Activated T-helper 2 cell treated with anti-CD3 and anti-CD28 coated beads, Interferon-gamma antibody, Interleukin-2, Interleukin-4, amounts not matched to agents 10 μg/mL and 5 μg/mL and 100 μg/mL, durations not matched to agents 14 hours and 24 hours and 36 hours (primary cell): ENCODE measurements at regions of chr1 and their contacts with region 1.

Region 1: DNA sequence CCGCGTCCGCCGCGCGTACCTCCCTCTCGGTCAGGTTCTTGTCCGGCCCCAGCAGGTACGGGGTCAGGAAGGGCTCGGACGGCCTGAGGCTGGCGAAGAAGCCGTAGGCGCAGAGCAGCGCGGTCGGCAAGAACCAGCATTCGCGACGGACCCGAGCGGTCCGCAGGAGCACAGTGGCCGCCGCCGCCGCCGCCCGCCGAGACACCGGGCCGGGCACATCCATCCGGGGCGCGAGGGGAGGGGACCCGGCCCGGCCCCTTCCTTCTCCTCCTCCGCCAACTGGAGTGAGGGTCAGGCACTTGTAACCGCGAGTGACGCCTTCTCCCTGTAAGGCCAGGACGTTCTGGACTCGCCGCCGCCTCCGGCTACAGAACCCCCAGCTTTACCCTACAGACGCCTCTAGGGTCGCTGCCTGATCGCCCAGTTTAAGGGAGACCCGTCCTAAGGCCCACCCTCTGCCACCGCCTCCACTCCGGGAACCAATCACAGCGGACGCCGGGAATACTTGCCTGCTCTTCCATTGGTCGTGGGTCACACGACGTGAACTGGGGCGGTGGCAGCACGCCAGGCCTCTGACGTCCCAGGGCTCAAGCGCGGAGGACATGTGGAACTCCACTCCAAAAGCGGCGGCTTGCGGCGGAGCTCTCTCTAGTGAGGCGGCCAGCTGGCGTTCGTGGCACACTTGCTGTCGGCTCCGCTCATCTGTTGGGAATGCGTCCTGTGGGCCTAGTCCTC is at the start of gene SLC19A2:
- DNase-seq: peak; percentile 94
- H3K4me3 Mint-ChIP-seq: peak within 1 kb of the TSS; percentile 89
- H3K27ac Mint-ChIP-seq: peak within 1 kb of the TSS; percentile 90
- H3K4me1 Mint-ChIP-seq: peaks cover 59% of the 10 kb centered on the region
- H3K27me3 Mint-ChIP-seq: no peaks in the 10 kb centered on the region
- total RNA-seq, gene SLC19A2: 11.2 and 11.9 TPM in 2 replicates

Region 2: DNA sequence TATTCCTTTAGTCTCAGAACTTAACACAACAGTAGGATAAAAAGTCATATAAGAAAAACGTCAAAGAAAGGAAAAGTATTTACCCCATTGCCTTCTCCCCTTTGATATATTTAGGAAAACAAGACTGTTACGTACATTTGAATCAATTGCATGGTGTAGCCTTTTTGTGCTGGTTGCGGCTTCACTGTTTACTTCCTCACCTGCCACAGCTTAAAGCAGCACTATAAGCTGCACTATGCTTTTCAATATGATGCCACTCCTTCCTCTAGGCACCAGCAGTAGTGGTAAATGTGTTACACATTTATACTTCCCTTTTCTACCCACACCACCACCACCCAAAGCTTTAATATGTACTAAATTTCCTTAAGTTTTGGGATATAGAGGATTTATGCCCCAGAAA is 268.1 kb before region 1 on chr1:
- intact Hi-C with region 1: no loop called
- DNase-seq: no peak
- H3K4me3 Mint-ChIP-seq: no peak overlapping the region
- H3K27ac Mint-ChIP-seq: no peak overlapping the region
- H3K4me1 Mint-ChIP-seq: peaks cover 3% of the 10 kb centered on the region
- H3K27me3 Mint-ChIP-seq: no peaks in the 10 kb centered on the region

Region 3: GRCh38 chr1:169312084-169312954 is 173.4 kb before region 1 on chr1:
- intact Hi-C with region 1: loop called (anchors 5 kb)
- DNase-seq: peak; percentile 69
- H3K4me3 Mint-ChIP-seq: no peak overlapping the region
- H3K27ac Mint-ChIP-seq: peak overlapping the region; percentile 70
- H3K4me1 Mint-ChIP-seq: peaks cover 31% of the 10 kb centered on the region
- H3K27me3 Mint-ChIP-seq: no peaks in the 10 kb centered on the region

Region 4: DNA sequence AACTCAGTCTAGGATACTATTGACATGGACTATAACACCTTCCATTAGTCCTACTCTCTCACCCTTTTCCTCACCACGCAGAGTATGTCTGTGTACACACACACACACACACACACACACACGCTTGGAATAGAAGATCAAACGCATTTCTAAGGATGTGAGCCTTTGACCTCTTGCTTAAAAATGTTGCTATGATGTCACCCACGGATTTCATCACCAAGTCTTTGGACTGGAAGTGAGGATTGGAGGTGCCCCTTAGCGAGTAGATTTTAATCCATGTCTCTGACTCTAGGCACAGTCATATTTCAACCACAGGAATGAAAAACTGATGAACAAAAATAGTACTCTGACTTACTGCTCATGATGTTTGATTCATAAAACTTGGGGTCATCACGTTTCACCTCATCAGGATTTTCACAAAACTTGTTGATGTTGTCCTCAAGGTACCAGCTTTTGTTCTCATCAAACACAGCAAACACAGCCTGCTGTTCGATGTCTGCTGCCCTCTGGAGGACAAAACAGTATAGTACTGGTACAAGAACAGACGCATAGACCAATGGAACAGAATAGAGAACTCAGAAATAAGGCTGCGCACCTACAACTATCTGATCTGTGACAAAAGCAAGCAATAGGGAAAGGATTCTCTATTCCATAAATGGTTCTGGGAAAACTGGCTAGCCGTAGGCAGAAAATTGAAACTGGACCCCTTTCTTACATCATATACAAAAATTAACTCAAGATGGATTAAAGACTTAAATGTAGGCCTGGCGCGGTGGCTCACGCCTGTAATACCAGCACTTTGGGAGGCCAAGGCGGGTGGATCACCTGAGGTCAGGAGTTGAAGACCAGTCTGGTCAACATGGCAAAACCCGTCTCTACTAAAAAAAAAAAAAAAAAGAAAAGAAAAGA is 60.6 kb after region 1 on chr1:
- intact Hi-C with region 1: loop called (anchors 1 kb)
- DNase-seq: peak; percentile 36
- H3K4me3 Mint-ChIP-seq: no peak overlapping the region
- H3K27ac Mint-ChIP-seq: peak overlapping the region; percentile 28
- H3K4me1 Mint-ChIP-seq: peaks cover 9% of the 10 kb centered on the region
- H3K27me3 Mint-ChIP-seq: no peaks in the 10 kb centered on the region

Region 5: GRCh38 chr1:169595764-169596711 is 110.3 kb after region 1 on chr1:
- intact Hi-C with region 1: loop called (anchors 2 kb)
- DNase-seq: no peak
- H3K4me3 Mint-ChIP-seq: no peak overlapping the region
- H3K27ac Mint-ChIP-seq: no peak overlapping the region
- H3K4me1 Mint-ChIP-seq: peaks cover 41% of the 10 kb centered on the region
- H3K27me3 Mint-ChIP-seq: peaks cover 4% of the 10 kb centered on the region

Region 6: DNA sequence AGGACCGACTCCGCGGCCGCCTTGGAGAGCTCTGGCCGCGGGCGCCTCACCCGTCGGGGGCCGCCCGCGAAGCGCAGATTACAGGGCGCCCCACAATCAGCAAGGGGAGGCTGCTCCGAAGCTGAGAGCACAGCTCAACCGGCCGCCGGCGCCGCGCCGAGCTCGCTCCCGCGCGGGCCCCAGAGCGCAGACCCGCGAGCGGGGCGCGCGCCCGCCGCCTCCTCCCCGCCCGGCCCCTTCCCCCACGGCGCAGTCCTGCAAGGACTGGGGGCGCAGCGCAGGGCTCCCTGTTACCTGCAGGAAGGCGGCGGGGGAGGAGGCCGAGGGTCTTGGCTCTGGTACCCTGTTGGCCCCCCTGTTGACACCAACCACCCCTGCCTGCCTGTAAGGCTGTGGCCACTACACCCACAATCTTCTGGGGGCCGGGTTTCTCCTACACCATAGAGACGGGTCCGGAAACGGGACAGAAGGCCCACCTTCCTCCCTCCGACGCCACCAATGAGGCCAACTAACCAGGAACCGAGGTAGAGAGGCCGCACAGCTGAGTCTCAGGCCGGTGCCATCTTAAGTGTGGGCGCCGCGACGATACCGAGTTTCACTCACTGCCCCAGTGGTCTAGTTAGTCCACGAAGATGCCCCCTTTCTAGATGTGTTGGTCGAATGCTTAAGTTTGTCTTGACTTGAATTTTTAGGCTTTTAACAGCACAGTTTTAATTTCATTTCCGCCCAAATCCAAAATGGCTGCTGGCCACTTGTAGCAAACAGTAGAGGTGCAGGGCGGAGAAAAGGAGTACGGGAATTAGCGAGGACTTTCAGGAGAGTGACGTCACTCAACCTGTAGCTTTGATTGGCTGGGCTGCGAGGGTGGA is 408.0 kb after region 1 on chr1 and contains the start of gene SCYL3:
- intact Hi-C with region 1: loop called (anchors 5 kb)
- DNase-seq: peak; percentile 89
- H3K4me3 Mint-ChIP-seq: peak within 1 kb of the TSS; percentile 86
- H3K27ac Mint-ChIP-seq: peak within 1 kb of the TSS; percentile 98
- H3K4me1 Mint-ChIP-seq: peaks cover 48% of the 10 kb centered on the region
- H3K27me3 Mint-ChIP-seq: peaks cover 8% of the 10 kb centered on the region
- total RNA-seq, gene SCYL3: 9.5 and 10.2 TPM in 2 replicates